Activated B cell treated with CpG ODN at 0.5 μM for 24 hours (primary cell): ENCODE measurements at regions of chr10 and their contacts with region 1.

Region 1: DNA sequence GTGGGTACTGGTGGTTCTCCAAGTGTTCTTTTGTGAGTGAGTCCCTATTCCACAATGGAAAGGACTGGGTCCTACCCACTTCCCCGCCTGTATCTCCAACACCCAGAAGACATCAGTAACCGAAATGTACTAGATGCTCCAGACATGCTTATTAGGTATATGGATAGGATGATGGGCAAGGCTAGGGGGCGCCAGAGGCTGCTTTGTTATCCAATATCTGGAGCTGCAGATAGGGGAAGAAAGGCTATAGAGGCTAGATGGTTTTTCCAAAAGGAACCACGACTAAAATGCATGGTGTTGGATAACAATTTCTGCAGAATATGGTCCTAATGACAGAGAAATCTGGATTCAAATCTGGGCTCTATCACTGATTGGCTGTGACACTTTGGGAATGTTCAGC is 56.2 kb upstream of the TM9SF3 start:
- DNase-seq: peak; percentile 54
- ATAC-seq: no peak
- H3K4me3 Mint-ChIP-seq: no peak overlapping the region
- H3K27ac Mint-ChIP-seq: peak overlapping the region; percentile 56
- H3K4me1 Mint-ChIP-seq: peaks cover 58% of the 10 kb centered on the region
- H3K27me3 Mint-ChIP-seq: no peaks in the 10 kb centered on the region
- CTCF ChIP-seq: no peak

Region 2: DNA sequence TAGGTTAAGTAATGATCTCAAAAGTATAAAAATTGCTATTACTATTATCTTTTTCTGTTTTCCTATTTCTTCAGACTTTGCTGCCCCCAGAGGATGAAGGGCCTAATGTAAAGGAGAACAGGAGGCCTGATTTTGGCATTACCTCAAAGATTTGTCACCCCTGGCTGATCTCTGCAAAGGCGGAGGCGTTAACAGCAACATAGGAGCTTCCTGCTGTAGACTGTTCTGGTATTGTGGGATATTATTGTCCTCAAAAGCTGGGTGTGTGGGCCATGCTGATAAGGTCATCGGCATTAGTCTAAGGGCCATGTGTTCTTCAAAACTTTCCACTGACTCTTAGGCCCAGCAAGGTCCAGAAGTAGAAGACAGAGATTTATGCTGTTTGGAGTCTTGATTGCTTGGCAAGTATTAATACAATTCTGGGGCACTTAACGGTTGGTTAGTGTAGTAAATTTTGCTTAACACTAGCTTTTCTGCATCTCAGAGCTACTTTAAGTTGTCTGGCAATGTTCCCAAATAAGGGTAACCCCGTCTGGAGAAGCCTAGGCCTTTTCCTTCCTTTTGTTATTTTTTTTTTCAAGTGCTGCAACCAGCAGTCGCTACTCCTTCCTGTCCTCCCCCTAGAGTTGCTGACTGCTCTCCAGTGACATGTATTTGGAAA is 901.0 kb before region 1 on chr10:
- CTCF ChIA-PET with region 1: no interaction called
- POLR2A ChIA-PET with region 1: no interaction called
- intact Hi-C with region 1: no loop called
- DNase-seq: no peak
- ATAC-seq: peak; percentile 83
- H3K4me3 Mint-ChIP-seq: peak overlapping the region; percentile 85
- H3K27ac Mint-ChIP-seq: peak overlapping the region; percentile 99
- H3K4me1 Mint-ChIP-seq: peaks cover 55% of the 10 kb centered on the region
- H3K27me3 Mint-ChIP-seq: no peaks in the 10 kb centered on the region
- CTCF ChIP-seq: no peak

Region 3: DNA sequence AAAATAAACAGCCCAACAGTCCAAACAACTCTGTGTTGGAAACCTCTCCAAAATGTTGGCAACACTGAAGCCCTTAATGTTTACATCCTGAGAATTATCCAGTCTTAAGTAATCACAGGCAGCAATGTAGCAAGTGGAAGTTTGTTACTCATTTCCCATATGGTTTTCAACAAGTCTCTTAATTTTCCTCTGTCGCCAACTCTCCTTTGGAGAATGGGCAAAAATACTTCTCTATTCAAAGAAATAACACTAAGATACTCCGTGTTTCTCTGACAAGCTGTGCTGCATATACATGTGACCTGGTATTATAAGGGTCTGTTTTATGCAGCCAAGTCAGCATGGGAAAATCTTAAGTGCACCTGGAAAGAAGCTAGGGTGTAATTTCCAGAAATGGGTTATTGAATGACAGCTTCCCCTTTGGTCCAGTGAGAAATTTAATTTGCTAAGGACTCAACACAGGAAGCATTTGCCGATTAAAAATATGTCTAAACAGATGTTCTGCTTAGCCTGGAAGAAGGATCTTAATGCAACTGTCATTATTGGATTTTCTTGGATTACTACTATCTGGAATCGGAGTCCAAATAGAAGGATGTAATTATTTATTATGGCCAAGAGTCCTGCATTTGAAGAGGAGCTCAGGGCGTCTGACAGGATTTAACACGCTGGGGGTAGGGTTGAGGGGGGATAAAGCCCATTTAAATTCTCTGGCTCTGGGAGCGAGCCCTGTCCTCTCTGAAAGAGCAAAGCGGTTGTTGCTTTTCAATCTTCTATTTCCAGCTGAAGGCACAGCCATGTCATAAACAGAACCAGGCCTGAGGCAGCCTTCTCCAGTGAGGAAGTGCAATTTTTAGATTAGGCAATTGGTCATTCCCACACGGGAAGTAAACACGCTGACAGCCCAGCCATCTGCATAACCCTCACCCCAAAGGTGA is 202.3 kb before region 1 on chr10:
- CTCF ChIA-PET with region 1: no interaction called
- POLR2A ChIA-PET with region 1: no interaction called
- intact Hi-C with region 1: no loop called
- DNase-seq: no peak
- ATAC-seq: no peak
- H3K4me3 Mint-ChIP-seq: no peak overlapping the region
- H3K27ac Mint-ChIP-seq: no peak overlapping the region
- H3K4me1 Mint-ChIP-seq: no peaks in the 10 kb centered on the region
- H3K27me3 Mint-ChIP-seq: peaks cover 13% of the 10 kb centered on the region
- CTCF ChIP-seq: no peak

Region 4: DNA sequence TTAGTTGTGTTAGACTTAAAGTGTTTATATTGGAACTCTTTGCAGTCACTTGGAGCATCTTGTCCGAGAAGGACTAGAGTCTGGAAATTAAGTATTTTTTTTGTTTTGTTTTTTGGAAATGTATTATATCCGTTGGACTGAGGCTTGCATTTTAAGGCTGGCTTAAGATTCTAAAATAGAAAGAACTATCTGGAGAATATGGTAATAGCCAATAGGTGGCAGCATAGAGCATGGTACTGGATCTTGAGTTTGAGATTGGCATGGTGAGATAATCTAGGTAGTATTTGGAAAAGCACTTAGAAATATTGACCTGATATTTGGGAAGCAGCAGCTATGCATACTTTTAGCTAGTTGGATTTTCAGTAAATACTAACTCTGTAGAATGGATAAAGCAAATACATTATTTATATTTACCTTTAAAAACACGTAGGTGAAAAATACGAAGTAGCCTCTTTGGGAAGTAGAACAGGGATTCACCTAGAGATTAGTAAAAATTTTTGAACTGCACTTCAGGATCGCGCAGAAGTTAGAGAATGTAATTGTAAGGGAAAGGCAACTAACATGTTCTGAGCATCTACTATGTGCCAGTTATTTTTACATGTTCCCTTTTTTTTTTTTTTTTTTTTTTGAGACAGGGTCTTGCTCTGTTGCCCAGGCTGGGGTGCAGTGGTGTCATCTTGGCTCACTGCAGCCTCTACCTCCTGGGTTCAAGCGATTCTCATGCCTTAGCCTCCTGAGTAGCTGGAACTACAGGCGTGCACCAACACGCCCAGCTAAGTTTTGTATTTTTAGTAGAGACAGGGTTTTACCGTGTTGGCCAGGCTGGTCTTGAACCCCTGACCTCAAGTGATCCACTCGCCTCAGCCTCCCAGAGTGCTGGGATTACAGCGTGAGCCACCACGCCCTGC is 267.8 kb after region 1 on chr10:
- CTCF ChIA-PET with region 1: interaction called, 3 read pairs
- POLR2A ChIA-PET with region 1: interaction called, 3 read pairs
- intact Hi-C with region 1: loop called (anchors 1 kb)
- DNase-seq: no peak
- ATAC-seq: peak; percentile 60
- H3K4me3 Mint-ChIP-seq: no peak overlapping the region
- H3K27ac Mint-ChIP-seq: no peak overlapping the region
- H3K4me1 Mint-ChIP-seq: peaks cover 15% of the 10 kb centered on the region
- H3K27me3 Mint-ChIP-seq: no peaks in the 10 kb centered on the region
- CTCF ChIP-seq: peak; percentile 28